ENCODE measurements at regions of chr3 and their contacts with region 1.

Region 1: DNA sequence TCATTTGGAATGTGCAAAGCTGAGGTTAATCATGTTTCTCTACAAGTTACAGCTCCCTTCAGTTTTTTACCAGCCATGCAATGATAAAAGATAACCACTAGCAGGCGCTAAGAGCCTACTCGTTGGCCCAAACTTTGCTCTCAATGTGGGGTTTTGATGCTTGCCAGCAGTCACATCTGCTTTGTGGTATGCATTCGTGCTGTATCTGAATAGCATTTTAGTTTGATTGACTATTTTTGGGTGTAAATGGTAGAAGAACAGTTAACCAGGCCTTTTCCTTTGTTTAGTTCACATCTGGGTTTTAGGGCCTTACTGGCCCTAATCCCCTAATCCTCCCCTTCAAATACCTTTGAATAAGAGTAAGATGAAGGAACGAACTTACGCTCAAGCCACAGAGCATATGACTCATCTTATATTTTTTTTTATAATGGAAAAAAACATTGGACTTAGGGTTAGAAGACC is 4.4 kb upstream of the CLDN11 start:
- DNase-seq: peak; percentile 58
- ATAC-seq: peak; percentile 53
- H3K4me3 Mint-ChIP-seq: no peak overlapping the region
- H3K27ac Mint-ChIP-seq: no peak overlapping the region
- H3K4me1 Mint-ChIP-seq: peaks cover 5% of the 10 kb centered on the region
- H3K27me3 Mint-ChIP-seq: peaks cover 19% of the 10 kb centered on the region

Region 2: GRCh38 chr3:169863458-169863899 is 550.8 kb before region 1 on chr3:
- CTCF ChIA-PET with region 1: interaction called, 4 read pairs
- POLR2A ChIA-PET with region 1: no interaction called
- intact Hi-C with region 1: loop called in 1 of 2 experiments (anchors 5 kb)
- DNase-seq: peak; percentile 77
- ATAC-seq: peak; percentile 61
- H3K4me3 Mint-ChIP-seq: no peak overlapping the region
- H3K27ac Mint-ChIP-seq: no peak overlapping the region
- H3K4me1 Mint-ChIP-seq: peaks cover 18% of the 10 kb centered on the region
- H3K27me3 Mint-ChIP-seq: peaks cover 4% of the 10 kb centered on the region

Region 3: DNA sequence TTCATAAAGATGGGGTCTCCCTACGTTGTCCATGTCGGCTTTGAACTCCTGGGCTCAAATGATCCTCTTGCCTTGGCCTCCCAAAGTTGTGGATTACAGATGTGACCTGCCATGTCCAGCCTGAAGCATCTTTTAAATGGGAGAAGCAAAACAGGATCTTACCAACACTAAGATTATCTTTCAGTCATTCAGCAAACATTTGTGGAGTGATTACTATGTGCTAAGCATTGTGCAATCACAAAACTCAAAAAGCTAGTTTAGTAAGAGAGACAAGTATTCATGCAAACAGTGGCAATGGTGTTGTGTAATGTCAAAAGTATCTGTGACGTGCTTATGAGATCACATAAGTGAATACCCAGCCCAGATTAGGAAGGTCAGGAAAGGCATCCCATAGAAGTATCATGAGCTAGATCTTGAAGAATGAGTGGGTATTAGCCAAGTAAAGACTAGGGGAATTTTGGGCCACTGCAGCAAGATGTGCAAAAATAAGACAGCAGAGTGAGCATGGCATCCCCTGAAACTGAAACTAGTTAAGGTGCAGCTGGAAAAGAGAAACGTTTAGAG is 415.6 kb before region 1 on chr3:
- CTCF ChIA-PET with region 1: no interaction called
- POLR2A ChIA-PET with region 1: no interaction called
- intact Hi-C with region 1: no loop called
- DNase-seq: peak; percentile 24
- ATAC-seq: peak; percentile 61
- H3K4me3 Mint-ChIP-seq: no peak overlapping the region
- H3K27ac Mint-ChIP-seq: peak overlapping the region; percentile 89
- H3K4me1 Mint-ChIP-seq: peaks cover 35% of the 10 kb centered on the region
- H3K27me3 Mint-ChIP-seq: no peaks in the 10 kb centered on the region

Region 4: DNA sequence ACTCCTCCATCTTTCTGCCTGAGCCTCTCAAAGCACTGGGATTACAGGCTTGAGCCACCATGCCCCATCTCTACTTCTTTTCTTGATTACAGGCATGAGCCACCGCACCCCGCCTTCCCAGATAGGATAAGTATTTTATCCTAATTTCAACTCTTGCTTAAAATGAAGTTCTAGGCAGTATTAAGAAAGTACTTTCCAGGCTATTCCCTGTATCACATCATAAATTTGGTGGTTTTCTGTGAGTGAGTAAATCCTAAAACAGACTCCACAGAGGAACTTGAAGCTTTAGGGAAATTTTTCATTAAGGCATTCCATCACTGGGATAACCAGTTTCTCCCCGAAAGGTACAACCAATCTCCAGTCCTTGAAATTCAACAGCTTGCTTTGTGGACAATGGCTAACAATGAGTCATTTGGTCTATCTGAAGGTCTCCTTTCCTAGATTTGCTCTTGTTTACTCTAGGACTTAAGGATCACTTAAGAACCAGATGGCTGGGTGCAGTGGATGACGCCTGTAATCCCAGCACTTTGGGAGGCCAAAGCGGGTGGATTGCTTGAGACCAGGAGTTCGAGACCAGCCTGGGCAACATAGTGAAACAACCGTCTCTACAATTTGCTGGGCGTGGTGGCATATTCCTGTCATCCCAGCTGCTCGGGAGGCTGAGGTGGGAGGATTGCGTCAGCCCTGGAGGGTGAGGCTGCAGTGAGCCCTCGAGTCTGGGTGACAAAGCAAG is 106.4 kb before region 1 on chr3:
- CTCF ChIA-PET with region 1: interaction called, 3 read pairs
- POLR2A ChIA-PET with region 1: no interaction called
- intact Hi-C with region 1: loop called in 1 of 2 experiments (anchors 2 kb)
- DNase-seq: no peak
- ATAC-seq: no peak
- H3K4me3 Mint-ChIP-seq: no peak overlapping the region
- H3K27ac Mint-ChIP-seq: no peak overlapping the region
- H3K4me1 Mint-ChIP-seq: no peaks in the 10 kb centered on the region
- H3K27me3 Mint-ChIP-seq: no peaks in the 10 kb centered on the region

Region 5: DNA sequence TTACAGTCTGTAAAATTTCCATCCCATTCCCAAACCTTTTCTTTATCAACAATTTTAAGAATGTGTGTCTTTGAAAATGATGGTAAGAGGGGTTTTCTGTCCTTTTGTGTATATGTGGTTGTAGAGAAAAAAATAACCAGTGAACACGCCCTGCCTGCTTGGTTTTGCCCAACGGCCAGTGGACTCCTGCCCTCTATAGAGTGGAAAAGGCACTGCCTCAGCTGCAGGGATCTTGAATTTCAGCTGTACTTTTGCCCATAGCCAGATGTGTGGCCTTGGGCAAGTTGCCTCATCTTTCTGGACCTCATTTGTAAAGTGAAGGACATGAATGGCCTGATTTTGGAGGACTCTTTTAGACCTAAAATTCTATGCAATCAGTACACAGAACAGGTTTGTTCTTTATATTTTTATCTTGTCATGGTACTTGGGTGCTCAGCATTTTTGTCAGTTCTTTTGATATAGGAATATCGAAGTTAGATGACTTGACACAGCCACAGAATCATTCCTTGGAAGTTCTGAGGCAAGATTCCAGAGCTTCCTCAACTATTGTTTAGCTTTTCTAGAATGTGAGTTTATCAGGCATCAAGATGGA is 85.4 kb after region 1 on chr3:
- CTCF ChIA-PET with region 1: no interaction called
- POLR2A ChIA-PET with region 1: no interaction called
- intact Hi-C with region 1: loop called in 1 of 2 experiments (anchors 5 kb)
- DNase-seq: peak; percentile 30
- ATAC-seq: no peak
- H3K4me3 Mint-ChIP-seq: no peak overlapping the region
- H3K27ac Mint-ChIP-seq: no peak overlapping the region
- H3K4me1 Mint-ChIP-seq: no peaks in the 10 kb centered on the region
- H3K27me3 Mint-ChIP-seq: peaks cover 3% of the 10 kb centered on the region

Region 6: GRCh38 chr3:170689893-170690660 is 275.8 kb after region 1 on chr3:
- CTCF ChIA-PET with region 1: interaction called, 13 read pairs
- POLR2A ChIA-PET with region 1: no interaction called
- intact Hi-C with region 1: loop called (anchors 1 kb)
- DNase-seq: peak; percentile 73
- ATAC-seq: peak; percentile 49
- H3K4me3 Mint-ChIP-seq: no peak overlapping the region
- H3K27ac Mint-ChIP-seq: no peak overlapping the region
- H3K4me1 Mint-ChIP-seq: peaks cover 4% of the 10 kb centered on the region
- H3K27me3 Mint-ChIP-seq: no peaks in the 10 kb centered on the region